Heart right ventricle (tissue), 16 donors: ENCODE measurements at regions of chr20 and their contacts with region 1.

Region 1: GRCh38 chr20:63520504-63520933 is at the start of gene PPDPF:
- DNase-seq: peak; percentile 79 to 89
- ATAC-seq: peak; percentile 86 to 92 (median 91)
- H3K4me3 ChIP-seq: peak within 1 kb of the TSS; percentile 55 to 99 (median 74)
- H3K27ac ChIP-seq: peak within 1 kb of the TSS; percentile 90 to 100 (median 96)
- H3K4me1 ChIP-seq: peaks cover 14 to 39% (median 22%) of the 10 kb centered on the region in 9 donors
- H3K27me3 ChIP-seq: peaks cover 0 to 3% (median 0%) of the 10 kb centered on the region in 7 donors
- CTCF ChIP-seq: no peak
- total RNA-seq, gene PPDPF: 186 to 433 (median 269) TPM

Region 2: GRCh38 chr20:63323362-63323981 is 197.0 kb before region 1 on chr20:
- intact Hi-C with region 1: no loop called
- DNase-seq: no peak
- ATAC-seq: no peak
- H3K4me3 ChIP-seq: no peak overlapping the region
- H3K27ac ChIP-seq: no peak overlapping the region
- H3K4me1 ChIP-seq: peaks cover 0 to 10% (median 0%) of the 10 kb centered on the region in 9 donors
- H3K27me3 ChIP-seq: peaks cover 0 to 31% (median 10%) of the 10 kb centered on the region in 7 donors
- CTCF ChIP-seq: no peak

Region 3: GRCh38 chr20:63442100-63442493 is 78.4 kb before region 1 on chr20:
- intact Hi-C with region 1: loop called in 4 of 10 experiments (anchors 2 to 10 kb)
- DNase-seq: peak; percentile 51 to 63
- ATAC-seq: peak; percentile 25 to 84 (median 62)
- H3K4me3 ChIP-seq: no peak overlapping the region
- H3K27ac ChIP-seq: no peak overlapping the region
- H3K4me1 ChIP-seq: peaks cover 0 to 15% (median 0%) of the 10 kb centered on the region in 9 donors
- H3K27me3 ChIP-seq: peaks cover 0 to 16% (median 8%) of the 10 kb centered on the region in 7 donors
- CTCF ChIP-seq: peak in 8 of 9 donors; percentile 18 to 60 (median 50)